ENCODE measurements at regions of chr6 and their contacts with region 1.

Region 1: DNA sequence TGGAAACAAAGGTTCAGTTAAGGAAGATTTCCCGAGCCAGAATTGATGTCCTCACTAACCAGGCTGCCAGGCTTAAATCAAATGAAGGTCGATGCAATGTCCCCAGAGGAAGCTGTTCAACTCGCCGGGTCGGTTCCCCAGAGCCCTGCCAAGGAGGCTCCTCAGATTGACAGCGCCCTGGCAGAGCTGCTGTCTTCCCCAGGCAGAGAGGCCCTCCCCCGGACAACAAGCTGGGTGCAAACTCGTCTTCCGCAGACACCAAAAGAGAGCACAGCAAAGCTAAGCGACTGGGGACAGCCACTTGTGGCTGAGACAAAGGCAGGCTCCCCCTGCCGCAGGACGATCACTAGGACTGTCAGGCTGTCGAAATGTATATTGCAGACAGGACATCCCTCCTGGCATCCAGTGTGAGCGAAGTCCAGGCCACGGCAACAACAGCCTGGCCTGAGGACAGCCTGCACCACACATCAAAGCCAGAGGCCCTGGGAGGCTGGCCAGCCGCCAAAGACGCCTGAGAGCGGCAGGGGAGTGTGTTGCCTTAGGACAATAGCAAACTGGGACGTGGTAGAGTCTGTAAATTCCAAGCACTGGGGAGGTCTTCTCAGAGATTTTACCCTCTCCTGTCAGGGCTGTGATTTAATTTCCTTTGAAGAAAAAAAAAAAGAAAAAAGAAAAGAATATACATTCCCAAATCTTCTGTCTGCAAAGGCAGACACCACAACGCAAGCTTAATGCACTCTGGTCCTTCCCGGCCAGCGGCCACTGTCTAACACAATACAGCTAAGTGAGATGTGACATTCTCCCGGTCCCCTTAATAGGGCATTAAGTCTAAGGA is 99.1 kb downstream of the HIVEP2 start:
- DNase-seq: peak; percentile 88
- ATAC-seq: peak; percentile 73 to 77
- H3K4me3 ChIP-seq: peak overlapping the region; percentile 44 to 50 (median 48)
- H3K27ac ChIP-seq: peak overlapping the region; percentile 85 to 93 (median 91)
- H3K4me1 ChIP-seq: peaks cover 75 to 85% of the 10 kb centered on the region in 2 donors
- H3K27me3 ChIP-seq: no peaks in the 10 kb centered on the region
- CTCF ChIP-seq: peak in 3 of 5 experiments; percentile 12 to 27 (median 17)
- POLR2A ChIP-seq: peak; percentile 55 to 74

Region 2: GRCh38 chr6:142819603-142820337 is 26.1 kb before region 1 on chr6:
- in situ Hi-C with region 1: no loop called
- intact Hi-C with region 1: loop called (anchors 2 kb)
- DNase-seq: no peak
- ATAC-seq: peak in 1 of 2 donors; percentile 55
- H3K4me3 ChIP-seq: peak overlapping the region; percentile 33 to 40 (median 35)
- H3K27ac ChIP-seq: peak overlapping the region; percentile 63 to 73 (median 69)
- H3K4me1 ChIP-seq: peaks cover 50 to 65% of the 10 kb centered on the region in 2 donors
- H3K27me3 ChIP-seq: no peaks in the 10 kb centered on the region
- CTCF ChIP-seq: no peak
- POLR2A ChIP-seq: no peak

Region 3: GRCh38 chr6:142885182-142885867 is 39.5 kb after region 1 on chr6:
- in situ Hi-C with region 1: no loop called
- intact Hi-C with region 1: loop called (anchors 1 kb)
- DNase-seq: peak; percentile 48 to 53
- ATAC-seq: peak; percentile 94 to 97
- H3K4me3 ChIP-seq: peak overlapping the region; percentile 38 to 54 (median 47)
- H3K27ac ChIP-seq: peak overlapping the region; percentile 81 to 93 (median 84)
- H3K4me1 ChIP-seq: peaks cover 61 to 71% of the 10 kb centered on the region in 2 donors
- H3K27me3 ChIP-seq: no peaks in the 10 kb centered on the region
- CTCF ChIP-seq: no peak
- POLR2A ChIP-seq: peak; percentile 55 to 80